H1 (cell line): ENCODE measurements at regions of chr10 and their contacts with region 1.

Region 1: GRCh38 chr10:74109452-74109851 is 41.2 kb downstream of the AP3M1 start:
- DNase-seq: no peak
- H3K4me3 ChIP-seq: no peak overlapping the region
- H3K27ac ChIP-seq: no peak overlapping the region
- H3K4me1 ChIP-seq: no peaks in the 10 kb centered on the region
- H3K27me3 ChIP-seq: no peaks in the 10 kb centered on the region
- CTCF ChIP-seq: no peak
- EP300 ChIP-seq: no peak
- POLR2A ChIP-seq: no peak
- RAD21 ChIP-seq: no peak

Region 2: GRCh38 chr10:74096777-74097176 is 12.7 kb before region 1 on chr10:
- CTCF ChIA-PET with region 1: interaction called, 15 read pairs
- POLR2A ChIA-PET with region 1: interaction called, 11 read pairs
- DNase-seq: no peak
- H3K4me3 ChIP-seq: no peak overlapping the region
- H3K27ac ChIP-seq: no peak overlapping the region
- H3K4me1 ChIP-seq: no peaks in the 10 kb centered on the region
- H3K27me3 ChIP-seq: no peaks in the 10 kb centered on the region
- CTCF ChIP-seq: no peak
- EP300 ChIP-seq: no peak
- POLR2A ChIP-seq: no peak
- RAD21 ChIP-seq: no peak

Region 3: GRCh38 chr10:74151056-74151878 is 41.8 kb after region 1 on chr10 and contains the start of gene ADK:
- CTCF ChIA-PET with region 1: no interaction called
- POLR2A ChIA-PET with region 1: no interaction called
- DNase-seq: peak; percentile 98 to 100
- H3K4me3 ChIP-seq: peak within 1 kb of the TSS; percentile 79 to 98 (median 94)
- H3K27ac ChIP-seq: peak within 1 kb of the TSS; percentile 95
- H3K4me1 ChIP-seq: peaks cover 0 to 2% (median under 1%) of the 10 kb centered on the region in 4 experiments; a peak in 3 of 7 replicates
- H3K27me3 ChIP-seq: no peaks in the 10 kb centered on the region
- CTCF ChIP-seq: peak in 2 of 3 experiments; percentile 35 to 47; a peak in 3 of 4 replicates
- EP300 ChIP-seq: no peak
- POLR2A ChIP-seq: peak in 1 of 2 experiments; percentile 95; a peak in 2 of 3 replicates
- RAD21 ChIP-seq: peak in 1 of 2 experiments; percentile 41; a peak in 2 of 4 replicates
- total RNA-seq, gene ADK: 39.8 and 42.4 TPM in 2 replicates